ENCODE measurements at regions of chr20 and their contacts with region 1.

Region 1: GRCh38 chr20:11274141-11274594 is 600.4 kb upstream of the JAG1 start:
- DNase-seq: peak; percentile 82
- H3K4me3 ChIP-seq: no peak overlapping the region
- H3K27ac ChIP-seq: no peak overlapping the region
- H3K4me1 ChIP-seq: peaks cover 35% of the 10 kb centered on the region
- H3K27me3 ChIP-seq: no peaks in the 10 kb centered on the region
- CTCF ChIP-seq: peak; percentile 81

Region 2: GRCh38 chr20:10553326-10553984 is 720.7 kb before region 1 on chr20:
- CTCF ChIA-PET with region 1: no interaction called
- POLR2A ChIA-PET with region 1: no interaction called
- intact Hi-C with region 1: loop called (anchors 5 kb)
- DNase-seq: peak; percentile 86
- H3K4me3 ChIP-seq: no peak overlapping the region
- H3K27ac ChIP-seq: no peak overlapping the region
- H3K4me1 ChIP-seq: peaks cover 28% of the 10 kb centered on the region
- H3K27me3 ChIP-seq: no peaks in the 10 kb centered on the region
- CTCF ChIP-seq: peak; percentile 89

Region 3: DNA sequence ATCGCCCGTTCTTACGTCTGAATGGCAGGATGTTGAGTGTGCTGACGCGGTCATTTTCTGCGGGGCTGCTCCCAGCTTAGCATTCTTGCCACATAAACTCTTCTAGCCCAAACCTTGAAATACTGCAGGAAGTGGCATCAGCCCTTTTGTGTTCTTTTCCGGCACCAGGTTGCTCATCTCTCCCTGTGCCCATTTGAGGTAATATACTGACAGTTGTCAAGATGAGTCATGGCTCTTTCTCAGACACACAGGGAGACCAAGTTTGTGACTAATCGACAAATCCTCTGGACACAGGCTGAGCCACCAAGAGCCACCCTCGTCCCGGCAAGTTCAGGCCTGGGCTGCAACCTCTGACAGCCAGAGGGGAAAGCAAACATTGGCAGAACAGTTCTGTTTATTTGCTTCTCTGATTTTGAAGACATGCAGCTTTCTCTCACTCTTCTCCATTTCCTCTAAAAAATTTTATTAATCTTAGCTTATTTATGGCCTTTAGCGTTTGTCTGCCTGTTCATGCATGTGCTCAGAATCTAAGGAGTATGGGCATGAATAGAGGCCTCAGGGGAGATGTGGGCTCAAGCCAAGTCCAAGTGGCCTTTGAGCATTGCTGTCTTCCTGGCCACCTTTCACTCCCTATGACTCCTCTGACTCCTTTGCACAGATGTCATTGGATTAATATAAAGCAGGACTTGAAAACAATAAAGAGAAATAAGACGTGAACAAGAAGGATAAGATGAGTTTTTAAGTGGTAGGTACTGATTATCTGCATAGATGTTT is 272.2 kb before region 1 on chr20:
- CTCF ChIA-PET with region 1: no interaction called
- POLR2A ChIA-PET with region 1: no interaction called
- intact Hi-C with region 1: loop called (anchors 10 kb)
- DNase-seq: peak; percentile 74
- H3K4me3 ChIP-seq: no peak overlapping the region
- H3K27ac ChIP-seq: no peak overlapping the region
- H3K4me1 ChIP-seq: no peaks in the 10 kb centered on the region
- H3K27me3 ChIP-seq: no peaks in the 10 kb centered on the region
- CTCF ChIP-seq: no peak

Region 4: DNA sequence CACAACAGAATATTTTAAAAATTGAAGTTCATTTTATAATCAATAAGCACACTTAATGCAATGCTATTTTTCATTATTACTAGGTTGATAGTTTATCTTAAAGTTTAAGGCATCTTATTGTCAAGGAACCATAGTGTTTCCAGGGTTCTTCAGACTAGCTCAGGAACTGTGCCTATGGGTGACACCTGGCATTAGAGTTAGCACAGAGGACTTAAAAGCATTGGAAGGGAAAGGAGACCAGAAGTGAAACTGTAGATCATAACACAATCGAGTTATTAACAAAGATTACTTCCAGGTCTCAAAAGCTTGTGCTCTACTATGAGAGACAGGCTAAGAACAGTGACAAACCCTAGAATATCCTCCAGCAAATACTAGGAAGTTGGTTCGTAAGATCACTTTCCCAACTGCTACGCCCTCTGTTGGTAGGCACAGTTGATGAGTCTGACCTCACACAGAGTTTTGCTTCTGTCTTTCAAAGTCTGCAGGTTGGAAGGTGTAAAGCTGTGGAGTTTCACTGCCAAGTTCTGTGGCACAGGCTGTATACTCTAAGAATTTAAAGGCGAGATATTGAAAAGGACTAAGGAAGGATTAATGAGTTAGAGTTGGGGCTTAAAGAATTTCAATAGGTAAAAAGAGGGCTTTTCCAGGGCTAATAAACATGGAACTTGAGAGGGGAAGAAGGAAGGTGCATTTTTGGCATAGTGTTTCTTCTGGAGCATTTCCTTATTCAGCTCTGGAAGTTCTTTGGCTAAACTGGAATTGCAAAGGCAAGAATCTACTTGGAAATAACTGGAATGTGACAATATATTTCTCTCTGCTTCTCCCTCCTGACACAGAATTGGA is 69.0 kb before region 1 on chr20:
- CTCF ChIA-PET with region 1: no interaction called
- POLR2A ChIA-PET with region 1: no interaction called
- intact Hi-C with region 1: loop called (anchors 5 kb)
- DNase-seq: peak; percentile 68
- H3K4me3 ChIP-seq: no peak overlapping the region
- H3K27ac ChIP-seq: peak overlapping the region; percentile 5
- H3K4me1 ChIP-seq: peaks cover 10% of the 10 kb centered on the region
- H3K27me3 ChIP-seq: no peaks in the 10 kb centered on the region
- CTCF ChIP-seq: peak; percentile 90

Measured in A673 (cell line).